ENCODE measurements at regions of chr4 and their contacts with region 1.

Region 1: DNA sequence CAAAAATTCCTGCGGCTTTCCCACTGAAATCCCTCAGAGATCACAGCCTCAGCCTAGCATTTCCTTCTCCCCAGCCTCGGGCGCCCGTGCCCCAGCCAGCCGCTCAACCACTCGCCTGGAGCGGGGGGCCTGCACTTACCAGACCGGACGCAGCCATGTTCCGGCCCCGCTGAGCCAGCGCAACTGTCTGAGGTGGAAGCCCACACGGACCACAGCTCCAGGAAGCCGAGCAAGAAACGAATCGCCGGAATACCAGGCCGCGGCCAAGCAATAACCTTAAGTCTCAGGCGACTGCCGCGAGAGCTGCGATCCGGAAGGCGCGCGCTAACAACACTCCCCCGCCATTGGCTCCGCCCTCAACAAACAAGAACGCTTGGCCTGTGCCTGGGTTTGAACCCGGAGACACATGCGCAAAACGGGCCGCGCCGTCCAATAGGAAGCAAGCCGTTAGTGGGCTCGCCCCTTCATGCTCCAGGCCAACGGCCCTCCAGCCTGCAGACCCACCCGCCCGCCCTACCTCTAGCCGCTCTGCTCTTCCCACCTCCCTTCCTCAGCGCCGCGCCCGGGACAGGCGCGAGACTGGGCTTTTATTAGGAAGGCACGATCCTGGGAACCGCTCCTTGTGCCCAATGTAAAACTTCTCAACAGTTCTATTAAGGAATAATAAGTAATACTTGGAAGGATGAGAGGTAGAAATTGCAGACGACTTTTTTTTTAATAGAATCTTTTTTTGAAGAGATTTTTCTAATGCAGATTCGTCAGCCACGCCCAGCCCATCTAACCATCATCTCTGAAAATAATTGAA is at the start of gene CENPC:
- DNase-seq: peak; percentile 97 to 99 (median 98)
- ATAC-seq: peak; percentile 100
- H3K4me3 ChIP-seq: peak within 1 kb of the TSS; percentile 58 to 95 (median 84)
- H3K27ac ChIP-seq: peak within 1 kb of the TSS; percentile 60 to 96 (median 88)
- H3K4me1 ChIP-seq: peaks cover 0 to 36% (median 16%) of the 10 kb centered on the region in 12 donors
- H3K27me3 ChIP-seq: no peaks in the 10 kb centered on the region
- CTCF ChIP-seq: no peak
- POLR2A ChIP-seq: peak in 1 of 2 donors; percentile 81
- total RNA-seq, gene CENPC: 5.9 to 16.7 (median 9.0) TPM

Region 2: GRCh38 chr4:67700738-67701516 is 155.5 kb after region 1 on chr4 and contains the start of gene UBA6:
- intact Hi-C with region 1: loop called in 3 of 10 experiments (anchors 1 to 10 kb)
- DNase-seq: peak; percentile 96 to 98 (median 96)
- ATAC-seq: peak; percentile 100
- H3K4me3 ChIP-seq: peak within 1 kb of the TSS; percentile 54 to 98 (median 82)
- H3K27ac ChIP-seq: peak within 1 kb of the TSS in 11 of 12 donors; percentile 71 to 92 (median 84)
- H3K4me1 ChIP-seq: peaks cover 0 to 26% (median 14%) of the 10 kb centered on the region in 12 donors
- H3K27me3 ChIP-seq: no peaks in the 10 kb centered on the region
- CTCF ChIP-seq: peak; percentile 29 to 73 (median 51)
- POLR2A ChIP-seq: peak in 1 of 2 donors; percentile 36
- total RNA-seq, gene UBA6: 15.2 to 35.3 (median 20.4) TPM

Region 3: GRCh38 chr4:67988991-67989390 is 443.6 kb after region 1 on chr4:
- intact Hi-C with region 1: no loop called
- DNase-seq: no peak
- ATAC-seq: no peak
- H3K4me3 ChIP-seq: no peak overlapping the region
- H3K27ac ChIP-seq: no peak overlapping the region
- H3K4me1 ChIP-seq: no peaks in the 10 kb centered on the region
- H3K27me3 ChIP-seq: no peaks in the 10 kb centered on the region
- CTCF ChIP-seq: no peak
- POLR2A ChIP-seq: no peak